Naive thymus-derived CD8-positive, alpha-beta T cell (primary cell): ENCODE measurements at regions of chr4 and their contacts with region 1.

Region 1: DNA sequence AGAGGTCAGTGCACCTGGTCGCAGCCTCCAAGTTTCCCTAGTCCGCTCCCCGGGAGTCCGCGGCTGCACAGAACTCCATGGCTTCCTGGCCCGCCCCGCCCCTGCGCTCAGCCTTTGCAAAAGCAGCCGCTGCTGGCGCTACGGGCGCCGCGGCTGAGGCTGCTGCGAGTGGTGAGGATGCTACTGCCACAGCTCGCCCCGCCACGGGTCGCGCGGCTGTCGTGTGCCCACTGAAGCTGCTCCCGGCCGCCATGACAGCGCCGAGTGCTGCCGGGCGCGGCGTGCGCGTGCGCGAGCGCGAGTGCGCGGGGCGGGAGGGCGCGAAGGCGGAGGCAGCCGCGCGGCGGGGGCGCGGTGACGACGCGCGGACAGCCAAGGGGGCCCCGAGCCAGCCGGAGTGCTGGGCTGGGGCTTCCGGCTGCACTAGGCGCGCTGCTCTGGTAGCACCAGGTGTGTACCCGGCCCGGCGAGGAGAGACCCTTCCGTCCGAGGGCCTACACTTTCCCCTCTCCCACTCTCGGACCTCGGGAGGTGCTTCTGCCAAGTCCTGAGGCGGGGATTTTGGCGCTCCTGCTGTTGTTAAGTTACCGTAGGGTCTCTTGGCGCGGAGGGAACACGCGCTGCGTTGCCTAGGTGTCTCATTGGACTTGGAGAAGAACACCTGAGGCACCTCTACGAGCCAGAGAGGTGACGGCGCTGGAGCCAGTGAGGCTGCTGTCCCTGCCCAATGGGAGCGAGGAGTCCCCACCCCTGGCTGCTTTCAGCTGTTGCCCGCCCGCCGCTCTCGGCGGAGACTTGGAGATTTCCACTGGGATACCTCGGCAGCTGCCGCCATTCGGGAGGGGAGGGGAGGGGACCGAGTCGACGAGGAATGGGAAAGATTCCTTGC is 619 bp upstream of the LRBA start:
- DNase-seq: peak; percentile 77 to 90 (median 86)
- ATAC-seq: peak; percentile 79 to 80
- H3K4me3 Mint-ChIP-seq: peak overlapping the region; percentile 98 to 100 (median 100)
- H3K27ac Mint-ChIP-seq: peak overlapping the region; percentile 97 to 100 (median 99)
- H3K4me1 Mint-ChIP-seq: peaks cover 14 to 36% (median 31%) of the 10 kb centered on the region in 4 donors
- H3K27me3 Mint-ChIP-seq: no peaks in the 10 kb centered on the region

Region 2: GRCh38 chr4:151099229-151099975 is 83.7 kb after region 1 on chr4 and contains the start of gene RPS3A:
- POLR2A ChIA-PET with region 1: interaction called, 18 read pairs
- DNase-seq: peak; percentile 92 to 100 (median 98)
- ATAC-seq: peak; percentile 85 to 87
- H3K4me3 Mint-ChIP-seq: peak within 1 kb of the TSS; percentile 94 to 100 (median 96)
- H3K27ac Mint-ChIP-seq: peak within 1 kb of the TSS; percentile 97 to 99 (median 98)
- H3K4me1 Mint-ChIP-seq: peaks cover 14 to 50% (median 34%) of the 10 kb centered on the region in 4 donors
- H3K27me3 Mint-ChIP-seq: peaks cover 0 to 2% (median 0%) of the 10 kb centered on the region in 5 donors
- polyA plus RNA-seq, gene RPS3A: 4,716 to 6,808 (median 5,781) TPM